ENCODE measurements at regions of chr6 and their contacts with region 1.

Region 1: DNA sequence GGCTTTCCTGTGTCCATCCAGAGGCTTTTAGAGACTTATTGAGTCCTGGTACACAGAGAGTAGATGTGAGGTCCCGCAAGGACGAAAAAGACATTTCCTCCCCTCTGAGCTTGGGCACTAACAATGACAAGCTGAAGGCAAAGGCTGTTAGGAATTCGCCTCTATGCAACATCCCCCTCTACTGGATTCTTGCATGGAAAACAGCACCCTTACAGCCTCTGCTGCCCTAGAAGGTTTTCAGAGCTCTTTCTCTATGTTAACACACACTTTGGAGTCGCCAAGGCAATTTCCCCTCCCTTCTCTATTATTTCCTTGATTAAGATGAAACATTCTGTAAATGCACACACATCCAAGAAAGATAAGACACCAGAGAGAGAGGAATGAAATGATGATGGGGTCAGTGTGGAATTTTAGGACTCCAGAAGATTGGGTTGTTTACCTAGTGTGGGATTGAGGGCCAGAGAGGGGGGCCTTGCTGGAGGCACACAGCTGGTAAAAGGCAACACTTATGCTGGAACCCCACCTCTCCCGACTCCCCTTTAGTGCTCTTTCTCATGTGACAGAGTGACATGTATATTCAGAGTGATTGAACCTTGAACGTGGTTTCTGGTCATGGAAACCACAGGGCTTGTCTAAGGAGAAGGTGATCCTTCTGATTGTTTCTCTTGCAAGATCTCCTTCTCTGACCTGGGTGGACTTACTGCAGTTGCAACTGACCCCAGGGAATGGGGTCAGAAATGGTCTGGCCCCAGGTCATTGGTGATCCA is 300.7 kb downstream of the CLIC5 start:
- DNase-seq: no peak
- ATAC-seq: peak; percentile 97

Region 2: GRCh38 chr6:44655412-44656342 is 1059.2 kb before region 1 on chr6:
- intact Hi-C with region 1: loop called (anchors 10 kb)
- DNase-seq: peak; percentile 83
- ATAC-seq: peak; percentile 81

Region 3: DNA sequence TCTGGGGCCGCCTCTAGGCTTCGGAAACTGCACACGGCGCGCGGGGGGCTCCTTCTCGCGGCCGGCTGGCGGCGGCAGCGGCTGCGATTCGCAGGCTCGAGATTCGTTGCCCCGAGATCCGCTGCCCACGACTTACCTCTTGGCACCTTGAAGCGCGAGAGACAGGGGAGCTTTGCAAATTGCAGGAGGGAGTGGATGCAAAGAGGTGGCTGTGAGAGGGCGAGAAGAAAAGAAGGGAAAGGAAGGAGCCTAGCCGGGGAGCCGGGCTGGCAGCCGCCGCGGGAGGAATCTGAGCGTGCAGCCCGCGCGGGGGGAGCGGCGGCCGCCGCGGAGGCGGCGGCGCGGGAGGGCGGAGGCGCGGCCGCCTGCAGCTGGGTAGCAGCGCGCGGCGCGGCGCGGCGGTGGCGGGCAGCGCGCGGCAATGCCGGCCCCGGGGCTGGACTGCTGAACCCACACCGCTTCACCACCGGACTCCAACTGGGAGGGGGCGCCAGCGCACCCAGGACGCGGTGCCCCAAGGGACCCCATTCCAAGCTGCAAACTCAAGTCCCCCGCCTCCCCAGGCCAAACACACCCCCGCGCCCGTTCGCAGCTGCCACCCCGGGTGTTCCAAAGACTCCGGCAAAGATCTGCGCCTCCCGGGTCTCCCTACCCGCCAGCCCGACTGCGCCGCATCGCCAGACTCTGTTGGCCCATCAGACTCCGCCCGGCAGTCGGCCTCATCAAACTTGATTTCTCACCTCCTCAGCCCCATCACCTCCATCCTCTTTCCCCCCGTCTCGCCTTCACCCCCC is 293.0 kb before region 1 on chr6:
- intact Hi-C with region 1: loop called (anchors 10 kb)
- DNase-seq: peak; percentile 72
- ATAC-seq: peak; percentile 81

Region 4: DNA sequence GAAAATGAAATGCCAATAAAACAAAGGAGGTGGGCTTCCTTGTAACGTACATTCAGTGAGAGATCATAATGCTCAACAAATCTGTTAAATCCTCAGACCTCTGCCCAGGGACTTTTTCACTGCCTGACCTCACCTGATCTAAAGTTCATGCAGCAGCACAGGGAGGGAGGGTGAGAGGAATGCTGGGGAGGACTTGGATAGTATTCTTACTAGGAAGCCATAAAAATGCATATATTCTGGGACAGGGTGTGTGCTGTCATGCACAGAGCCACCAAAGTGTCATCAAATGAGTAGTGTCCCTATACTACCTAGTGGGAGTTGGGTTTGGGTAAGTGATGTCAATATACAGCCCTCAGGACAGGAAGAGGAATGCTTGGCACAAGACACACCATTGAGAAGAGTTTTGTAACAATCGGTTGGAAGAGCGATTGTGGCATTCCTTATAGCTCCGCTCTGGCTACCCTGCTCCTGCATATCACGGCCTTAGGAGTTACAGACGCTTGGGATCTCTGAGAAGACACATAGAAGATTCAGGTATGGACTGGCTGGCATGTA is 268.2 kb after region 1 on chr6:
- intact Hi-C with region 1: no loop called
- DNase-seq: no peak
- ATAC-seq: no peak

Measured in left ventricle myocardium superior (tissue), 1 donor.